ENCODE measurements at regions of chr3 and their contacts with region 1.

Region 1: GRCh38 chr3:188154014-188154808 is at the start of gene LPP:
- DNase-seq: peak; percentile 31 to 84
- H3K4me3 ChIP-seq: peak within 1 kb of the TSS; percentile 58 to 97 (median 69)
- H3K27ac ChIP-seq: peak within 1 kb of the TSS; percentile 84; the same call in 1 of the 2 replicates
- H3K4me1 ChIP-seq: peaks cover 4 to 13% (median 6%) of the 10 kb centered on the region in 4 experiments; a peak in 6 of 7 replicates
- H3K27me3 ChIP-seq: no peaks in the 10 kb centered on the region
- CTCF ChIP-seq: peak in 1 of 3 experiments; percentile 19; a peak in 1 of 4 replicates
- EP300 ChIP-seq: peak in 1 of 2 experiments; percentile 68; a peak in 1 of 3 replicates
- POLR2A ChIP-seq: peak; percentile 62 to 79
- RAD21 ChIP-seq: peak; percentile 23 to 36; a peak in 2 of 4 replicates
- total RNA-seq, gene LPP: 53.3 and 60.2 TPM in 2 replicates

Region 2: GRCh38 chr3:187745201-187746058 is 408.8 kb before region 1 on chr3 and contains the start of gene BCL6:
- CTCF ChIA-PET with region 1: interaction called, 16 read pairs
- POLR2A ChIA-PET with region 1: interaction called, 19 read pairs
- DNase-seq: peak; percentile 83 to 89
- H3K4me3 ChIP-seq: peak within 1 kb of the TSS; percentile 79 to 91 (median 87)
- H3K27ac ChIP-seq: peak within 1 kb of the TSS; percentile 100
- H3K4me1 ChIP-seq: peaks cover 9 to 21% (median 11%) of the 10 kb centered on the region in 4 experiments; a peak in 6 of 7 replicates
- H3K27me3 ChIP-seq: peaks cover 0 to 10% (median 5%) of the 10 kb centered on the region in 4 experiments; a peak in 3 of 7 replicates
- CTCF ChIP-seq: no peak
- EP300 ChIP-seq: peak in 1 of 2 experiments; percentile 99; a peak in 2 of 3 replicates
- POLR2A ChIP-seq: peak; percentile 86 to 88
- RAD21 ChIP-seq: peak in 1 of 2 experiments; percentile 11; a peak in 1 of 4 replicates
- total RNA-seq, gene BCL6: 8.7 and 10.4 TPM in 2 replicates

Region 3: DNA sequence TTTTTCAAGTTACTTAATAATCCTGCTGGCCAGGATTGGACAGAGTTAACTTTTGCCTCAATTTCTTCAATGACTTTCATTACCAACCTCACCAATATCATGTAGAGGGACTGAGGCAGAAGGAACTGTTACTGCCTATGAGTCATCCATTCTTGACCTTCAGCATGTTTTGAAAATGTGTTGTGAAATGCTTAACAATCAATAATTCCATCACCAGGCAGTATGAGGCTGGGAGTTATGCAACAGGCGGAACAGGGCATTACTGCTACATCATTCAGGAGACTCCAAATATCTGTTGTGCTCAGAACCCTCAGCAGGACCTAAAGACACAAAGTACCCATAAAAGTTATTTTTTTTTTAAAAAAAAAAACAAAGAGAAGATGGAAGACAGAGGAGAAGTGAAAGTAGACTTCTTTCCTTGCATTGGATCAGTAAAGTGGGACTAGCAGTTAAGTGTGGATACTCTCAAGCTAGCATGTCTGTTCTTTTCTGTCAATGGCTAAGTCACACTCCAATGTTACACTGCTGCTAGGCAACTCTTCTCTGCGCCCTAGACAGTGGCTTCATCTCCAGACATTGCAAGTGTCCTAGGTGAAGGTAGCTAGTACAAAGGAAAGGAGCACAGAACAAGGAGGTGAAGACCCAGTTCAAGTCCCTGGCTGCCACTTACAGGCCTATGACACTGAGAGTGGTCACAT is 185.2 kb before region 1 on chr3:
- CTCF ChIA-PET with region 1: no interaction called
- POLR2A ChIA-PET with region 1: no interaction called
- DNase-seq: no peak
- H3K4me3 ChIP-seq: no peak overlapping the region
- H3K27ac ChIP-seq: no peak overlapping the region
- H3K4me1 ChIP-seq: no peaks in the 10 kb centered on the region
- H3K27me3 ChIP-seq: no peaks in the 10 kb centered on the region
- CTCF ChIP-seq: no peak
- EP300 ChIP-seq: no peak
- POLR2A ChIP-seq: no peak
- RAD21 ChIP-seq: no peak

Region 4: GRCh38 chr3:188164248-188164687 is 10.1 kb after region 1 on chr3:
- CTCF ChIA-PET with region 1: interaction called, 4 read pairs
- POLR2A ChIA-PET with region 1: interaction called, 19 read pairs
- DNase-seq: no peak
- H3K4me3 ChIP-seq: no peak overlapping the region
- H3K27ac ChIP-seq: no peak overlapping the region
- H3K4me1 ChIP-seq: peaks cover 0 to 5% (median 2%) of the 10 kb centered on the region in 4 experiments; a peak in 3 of 7 replicates
- H3K27me3 ChIP-seq: no peaks in the 10 kb centered on the region
- CTCF ChIP-seq: no peak
- EP300 ChIP-seq: no peak
- POLR2A ChIP-seq: no peak
- RAD21 ChIP-seq: no peak

Region 5: DNA sequence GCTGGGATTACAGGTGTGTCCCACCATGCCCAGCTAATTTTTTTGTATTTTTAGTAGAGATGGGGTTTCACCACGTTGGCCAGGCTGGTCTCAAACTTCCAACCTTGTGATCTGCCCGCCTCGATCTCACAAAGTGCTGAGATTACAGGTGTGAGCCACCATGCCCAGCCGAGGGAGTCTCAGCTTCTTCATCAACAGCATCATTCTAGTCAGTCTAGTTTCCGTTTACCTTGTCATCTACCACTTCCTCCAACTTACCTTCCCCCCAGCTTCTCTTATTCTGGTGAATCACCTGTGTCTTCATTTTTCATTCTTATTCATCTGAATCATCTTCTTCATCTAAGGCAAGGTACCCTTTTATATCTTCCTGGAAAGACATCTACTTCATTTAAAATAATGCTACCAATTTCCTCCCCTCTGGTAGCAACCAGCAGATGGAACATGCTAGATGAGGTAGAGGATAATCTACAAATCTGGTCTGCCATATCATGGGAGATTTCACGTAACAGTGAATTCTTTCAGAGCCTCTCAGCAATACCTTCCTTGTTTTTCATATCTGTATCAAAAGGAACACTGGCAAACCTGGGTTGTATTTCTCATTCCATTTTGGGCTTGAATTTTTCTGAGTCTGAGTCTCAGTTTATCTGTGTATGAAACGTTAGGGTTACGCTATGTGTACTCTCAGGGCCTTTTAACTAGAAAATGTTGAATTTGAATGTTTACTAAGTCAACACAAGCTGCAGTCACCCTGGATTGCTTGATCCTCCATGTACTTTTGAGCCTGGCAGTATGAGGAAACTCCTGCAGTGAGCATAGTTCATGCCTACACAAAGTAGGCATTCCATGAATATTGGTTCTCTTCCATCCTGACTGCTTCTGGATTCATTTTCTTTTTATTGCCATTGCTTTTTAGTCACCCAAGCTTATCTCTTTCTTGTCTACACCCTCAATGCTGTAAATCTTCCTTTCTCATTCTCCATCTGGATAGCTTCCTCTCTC is 16.5 kb after region 1 on chr3:
- CTCF ChIA-PET with region 1: interaction called, 10 read pairs
- POLR2A ChIA-PET with region 1: interaction called, 19 read pairs
- DNase-seq: no peak
- H3K4me3 ChIP-seq: no peak overlapping the region
- H3K27ac ChIP-seq: no peak overlapping the region
- H3K4me1 ChIP-seq: peaks cover 0 to 5% (median 0%) of the 10 kb centered on the region in 4 experiments; a peak in 2 of 7 replicates
- H3K27me3 ChIP-seq: no peaks in the 10 kb centered on the region
- CTCF ChIP-seq: no peak
- EP300 ChIP-seq: no peak
- POLR2A ChIP-seq: no peak
- RAD21 ChIP-seq: no peak

Region 6: DNA sequence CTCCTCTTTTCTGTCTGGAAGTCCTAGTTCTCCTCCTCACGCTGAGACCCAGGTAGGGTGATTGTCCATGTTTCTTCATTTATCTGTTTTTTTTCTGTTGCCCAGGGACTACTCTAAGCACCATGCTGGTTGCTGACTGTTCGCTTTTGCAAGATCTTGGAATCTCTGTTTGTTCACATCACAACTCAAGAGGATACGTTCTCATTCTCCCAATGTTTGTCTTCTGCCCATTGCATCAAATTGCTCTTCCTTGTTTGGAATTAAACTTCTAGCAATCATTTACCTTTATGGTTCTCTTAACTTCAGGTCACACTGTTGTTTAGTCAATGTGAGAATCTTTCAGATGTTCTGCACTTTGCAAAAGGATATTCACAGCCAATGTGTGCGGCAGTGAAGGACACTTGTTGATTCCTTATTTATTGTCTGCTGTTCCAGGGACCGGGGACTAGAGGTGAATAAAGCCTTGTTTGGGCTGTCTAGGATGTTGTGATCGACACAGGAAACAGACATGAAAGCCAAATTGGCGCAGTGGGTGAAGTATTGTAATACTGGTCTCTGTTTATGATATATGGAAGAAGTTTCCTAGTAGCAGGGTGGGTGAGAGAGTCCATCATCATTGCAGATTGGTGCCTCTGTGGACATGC is 24.2 kb after region 1 on chr3:
- CTCF ChIA-PET with region 1: interaction called, 3 read pairs
- POLR2A ChIA-PET with region 1: interaction called, 14 read pairs
- DNase-seq: no peak
- H3K4me3 ChIP-seq: no peak overlapping the region
- H3K27ac ChIP-seq: no peak overlapping the region
- H3K4me1 ChIP-seq: peaks cover 0 to 7% (median 2%) of the 10 kb centered on the region in 4 experiments; a peak in 3 of 7 replicates
- H3K27me3 ChIP-seq: no peaks in the 10 kb centered on the region
- CTCF ChIP-seq: no peak
- EP300 ChIP-seq: no peak
- POLR2A ChIP-seq: no peak
- RAD21 ChIP-seq: no peak

Region 7: GRCh38 chr3:188185717-188186251 is 31.6 kb after region 1 on chr3:
- CTCF ChIA-PET with region 1: no interaction called
- POLR2A ChIA-PET with region 1: interaction called, 14 read pairs
- DNase-seq: no peak
- H3K4me3 ChIP-seq: no peak overlapping the region
- H3K27ac ChIP-seq: no peak overlapping the region
- H3K4me1 ChIP-seq: peaks cover 3 to 13% (median 7%) of the 10 kb centered on the region in 4 experiments
- H3K27me3 ChIP-seq: no peaks in the 10 kb centered on the region
- CTCF ChIP-seq: no peak
- EP300 ChIP-seq: no peak
- POLR2A ChIP-seq: no peak
- RAD21 ChIP-seq: no peak

Measured in H1 (cell line).